Activated naive CD4-positive, alpha-beta T cell treated with anti-CD3 and anti-CD28 coated beads for 36 hours (primary cell): ENCODE measurements at regions of chr12 and their contacts with region 1.

Region 1: GRCh38 chr12:21773263-21773741 is 1.2 kb downstream of the KCNJ8 start:
- DNase-seq: peak; percentile 38
- H3K4me3 Mint-ChIP-seq: peak overlapping the region; percentile 27
- H3K27ac Mint-ChIP-seq: no peak overlapping the region
- H3K4me1 Mint-ChIP-seq: peaks cover 10% of the 10 kb centered on the region
- H3K27me3 Mint-ChIP-seq: peaks cover 37% of the 10 kb centered on the region

Region 2: GRCh38 chr12:21416511-21417121 is 356.7 kb before region 1 on chr12:
- CTCF ChIA-PET with region 1: no interaction called
- intact Hi-C with region 1: loop called (anchors 10 kb)
- DNase-seq: no peak
- H3K4me3 Mint-ChIP-seq: no peak overlapping the region
- H3K27ac Mint-ChIP-seq: no peak overlapping the region
- H3K4me1 Mint-ChIP-seq: no peaks in the 10 kb centered on the region
- H3K27me3 Mint-ChIP-seq: peaks cover 18% of the 10 kb centered on the region

Region 3: GRCh38 chr12:21989819-21990412 is 216.6 kb after region 1 on chr12:
- CTCF ChIA-PET with region 1: no interaction called
- intact Hi-C with region 1: loop called (anchors 5 kb)
- DNase-seq: no peak
- H3K4me3 Mint-ChIP-seq: no peak overlapping the region
- H3K27ac Mint-ChIP-seq: no peak overlapping the region
- H3K4me1 Mint-ChIP-seq: peaks cover 7% of the 10 kb centered on the region
- H3K27me3 Mint-ChIP-seq: peaks cover 5% of the 10 kb centered on the region